IMR-90 (cell line): ENCODE measurements at regions of chr16 and their contacts with region 1.

Region 1: DNA sequence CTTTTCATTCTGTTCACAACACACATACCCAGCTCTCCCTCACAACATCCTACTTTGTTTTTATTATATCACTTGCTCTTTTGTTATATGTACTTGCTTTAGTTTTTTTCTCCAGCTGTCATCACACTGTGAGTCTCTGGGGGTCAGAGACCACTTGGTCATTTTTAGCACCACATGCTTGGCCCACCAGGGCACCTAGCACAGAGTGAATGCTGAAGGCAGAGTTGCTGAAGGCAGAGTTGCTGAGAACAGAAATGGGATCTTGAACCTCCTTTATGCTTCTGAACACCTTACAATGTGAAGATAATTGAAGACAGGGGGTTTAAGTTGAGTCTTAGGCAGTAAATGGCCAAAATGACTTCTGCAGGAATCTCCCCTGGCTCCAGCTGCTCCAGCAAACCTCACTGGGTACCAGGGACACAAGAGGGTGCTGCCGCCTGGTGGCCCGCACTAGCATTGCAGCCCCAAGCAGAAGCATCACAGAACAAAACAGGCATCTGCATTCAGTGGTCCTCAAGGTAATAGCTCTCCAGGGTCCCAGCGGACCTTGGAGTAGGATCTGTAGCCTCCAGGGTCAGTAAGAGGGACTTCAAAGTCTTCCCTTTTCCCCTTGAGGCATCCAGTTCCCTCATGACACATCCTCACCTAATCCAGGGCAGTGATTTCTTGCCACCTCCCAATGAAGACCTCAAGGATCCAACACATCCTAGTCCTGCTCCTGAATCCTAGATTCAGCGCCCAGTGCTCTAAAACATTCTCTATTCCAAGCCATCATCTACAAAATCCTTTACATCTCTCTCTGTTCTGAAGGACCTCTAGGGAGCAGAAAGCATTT is 1972.6 kb downstream of the TP53TG3F start:
- DNase-seq: no peak
- ATAC-seq: no peak
- H3K4me3 ChIP-seq: no peak overlapping the region
- H3K27ac ChIP-seq: no peak overlapping the region
- H3K4me1 ChIP-seq: no peaks in the 10 kb centered on the region
- H3K27me3 ChIP-seq: no peaks in the 10 kb centered on the region
- CTCF ChIP-seq: no peak; the same call in 1 of the 2 replicates
- POLR2A ChIP-seq: no peak
- RAD21 ChIP-seq: no peak

Region 2: DNA sequence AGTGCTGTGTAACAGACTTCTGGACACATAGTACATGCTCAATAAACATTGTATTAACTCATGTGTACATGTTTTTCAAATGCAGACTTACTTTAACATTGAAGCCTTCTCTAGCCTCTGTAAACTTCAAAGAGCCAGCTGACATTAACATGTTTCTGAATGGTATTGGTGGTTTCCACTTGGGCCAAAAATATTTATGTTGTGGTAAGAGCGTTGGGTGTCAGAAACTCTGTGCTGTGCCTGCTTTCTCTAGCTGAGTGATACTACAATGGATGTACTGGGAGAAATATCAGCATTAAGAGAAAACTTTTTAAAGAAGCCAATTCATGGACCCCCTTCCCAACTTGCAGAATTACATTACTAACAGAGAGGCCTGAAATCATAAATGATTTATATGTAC is 20.9 kb before region 1 on chr16:
- CTCF ChIA-PET with region 1: no interaction called
- POLR2A ChIA-PET with region 1: no interaction called
- dilution Hi-C with region 1: no loop called
- in situ Hi-C with region 1: no loop called
- intact Hi-C with region 1: loop called (anchors 2 kb)
- DNase-seq: no peak
- ATAC-seq: no peak
- H3K4me3 ChIP-seq: no peak overlapping the region
- H3K27ac ChIP-seq: no peak overlapping the region
- H3K4me1 ChIP-seq: no peaks in the 10 kb centered on the region
- H3K27me3 ChIP-seq: no peaks in the 10 kb centered on the region
- CTCF ChIP-seq: no peak
- POLR2A ChIP-seq: no peak
- RAD21 ChIP-seq: no peak